Activated CD4-positive, alpha-beta memory T cell treated with anti-CD3 and anti-CD28 coated beads, Interleukin-2, amount 10 ng/mL, durations not matched to agents 7 days and 5 days (primary cell): ENCODE measurements at regions of chr3 and their contacts with region 1.

Region 1: DNA sequence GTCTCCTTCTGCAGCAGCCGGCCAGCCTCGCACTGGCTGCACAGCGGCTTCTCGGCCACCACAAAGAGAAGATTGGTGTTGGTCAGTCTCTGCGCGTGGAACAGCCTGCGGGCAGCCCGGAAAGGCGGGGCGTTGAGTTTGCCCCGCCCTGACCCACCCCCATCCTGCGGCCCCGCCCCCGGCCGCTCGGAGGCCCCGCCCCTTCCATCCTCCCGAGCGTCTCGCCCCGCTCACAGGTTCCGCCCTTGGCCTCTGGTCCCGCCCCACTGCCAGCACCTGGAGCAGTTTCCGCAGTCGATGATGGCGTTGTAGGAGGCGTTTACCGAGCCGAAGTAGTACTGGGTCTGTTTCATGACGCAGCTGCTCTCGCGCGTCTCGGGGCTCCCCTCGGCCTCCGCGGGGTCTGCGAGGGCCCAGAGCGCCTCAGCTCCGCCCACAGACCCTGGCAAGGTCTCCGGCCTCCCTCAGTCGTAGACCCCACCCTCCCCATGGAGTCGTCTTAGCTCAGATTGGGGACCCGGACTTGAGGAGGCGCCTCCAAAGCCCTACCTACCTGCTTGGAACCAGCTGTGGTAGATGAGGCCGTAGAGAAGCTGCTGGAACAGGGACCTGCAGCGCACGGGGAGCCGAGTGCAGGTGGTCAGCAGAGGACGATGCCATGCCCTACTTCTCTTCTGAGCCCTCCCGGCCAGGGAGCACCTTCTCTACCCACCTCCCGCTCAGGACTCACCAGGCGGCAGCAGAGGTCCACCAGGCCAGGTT is 5.9 kb upstream of the TMEM115 start:
- DNase-seq: peak; percentile 96
- H3K4me3 Mint-ChIP-seq: peak overlapping the region; percentile 75
- H3K27ac Mint-ChIP-seq: peak overlapping the region; percentile 64
- H3K4me1 Mint-ChIP-seq: peaks cover 11% of the 10 kb centered on the region
- H3K27me3 Mint-ChIP-seq: no peaks in the 10 kb centered on the region

Region 2: DNA sequence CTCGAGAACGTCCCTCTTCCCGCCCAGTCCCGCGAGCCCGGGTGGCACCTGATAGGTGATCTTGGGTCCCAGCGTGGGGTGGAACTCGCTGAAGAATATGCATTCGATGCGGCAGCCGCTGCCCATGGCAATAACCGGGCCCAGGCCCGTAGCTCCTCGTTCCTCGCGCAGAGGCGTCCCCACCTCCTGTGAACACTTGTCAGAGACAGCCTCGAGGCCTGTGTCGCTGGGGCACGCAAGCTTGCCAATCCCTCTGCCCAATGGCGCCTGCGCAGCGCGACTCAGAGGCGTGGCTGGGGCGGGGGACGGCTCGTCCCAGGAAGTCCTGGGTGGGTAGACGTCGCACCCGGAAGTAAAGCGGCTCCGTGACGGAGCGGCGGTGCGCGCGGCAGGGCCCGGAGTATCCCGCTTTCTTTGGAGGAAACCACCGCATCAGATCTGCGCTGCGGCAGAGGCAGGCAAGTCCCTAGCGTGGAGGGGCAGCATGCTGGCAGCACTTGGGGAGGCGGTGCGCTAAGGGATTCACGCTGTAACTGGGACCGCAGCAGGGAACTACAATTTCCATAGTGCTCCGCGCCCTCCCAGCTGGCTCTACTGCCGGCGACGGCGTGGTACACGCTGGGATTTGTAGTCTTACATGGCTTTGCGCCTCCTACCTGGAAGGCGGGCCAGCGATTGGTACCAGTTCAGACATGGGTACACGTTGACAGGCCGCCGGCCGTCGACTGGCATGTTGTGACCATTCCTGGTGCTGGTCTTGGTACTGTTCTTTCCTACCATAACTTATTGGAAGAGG is 14.5 kb before region 1 on chr3 and contains the starts of genes CYB561D2 and NPRL2:
- CTCF ChIA-PET with region 1: interaction called, 31 read pairs
- POLR2A ChIA-PET with region 1: interaction called, 19 read pairs
- DNase-seq: peak; percentile 99
- H3K4me3 Mint-ChIP-seq: peak within 1 kb of the TSS; percentile 91
- H3K27ac Mint-ChIP-seq: peak within 1 kb of the TSS; percentile 93
- H3K4me1 Mint-ChIP-seq: peaks cover 66% of the 10 kb centered on the region
- H3K27me3 Mint-ChIP-seq: no peaks in the 10 kb centered on the region
- total RNA-seq, gene CYB561D2: 37.1 to 39.7 TPM
- total RNA-seq, gene NPRL2: 48.8 to 50.1 TPM

Region 3: DNA sequence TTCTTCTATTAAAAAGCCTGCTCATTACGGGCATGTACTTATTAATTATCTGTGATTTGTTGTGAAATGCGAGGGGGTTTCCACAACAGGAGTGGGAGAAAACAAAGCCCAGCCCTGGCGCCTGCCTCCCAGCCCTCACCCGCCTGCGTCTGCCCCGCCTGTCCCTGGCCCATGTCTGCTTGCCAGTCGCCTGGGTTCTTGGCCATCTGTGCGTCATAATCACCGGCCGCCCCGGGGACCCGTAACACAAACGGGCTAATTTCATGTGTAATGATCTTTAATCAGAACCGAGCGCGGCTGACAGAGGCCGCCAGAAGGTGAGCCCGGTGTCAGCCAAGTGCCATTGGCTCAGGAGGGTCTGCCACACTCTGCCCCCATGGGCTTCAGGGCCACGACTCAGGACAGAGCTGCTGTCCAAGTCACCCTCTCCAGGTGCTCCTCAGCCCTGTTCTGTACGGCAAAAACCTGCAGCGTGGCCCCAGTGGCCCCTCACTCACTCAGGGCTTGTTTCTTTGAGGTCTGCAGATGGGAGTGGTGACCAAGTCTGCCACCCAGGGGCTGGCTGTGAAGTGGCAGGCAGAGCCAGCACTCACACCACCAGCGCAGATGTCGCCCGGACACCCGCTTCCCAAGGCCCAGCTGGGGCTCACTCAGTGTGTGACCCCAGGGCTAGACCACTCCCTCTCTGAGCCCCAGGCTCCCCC is 22.9 kb after region 1 on chr3:
- CTCF ChIA-PET with region 1: no interaction called
- POLR2A ChIA-PET with region 1: no interaction called
- DNase-seq: no peak
- H3K4me3 Mint-ChIP-seq: no peak overlapping the region
- H3K27ac Mint-ChIP-seq: no peak overlapping the region
- H3K4me1 Mint-ChIP-seq: peaks cover 6% of the 10 kb centered on the region
- H3K27me3 Mint-ChIP-seq: no peaks in the 10 kb centered on the region

Region 4: GRCh38 chr3:50450209-50450921 is 85.1 kb after region 1 on chr3:
- CTCF ChIA-PET with region 1: no interaction called
- POLR2A ChIA-PET with region 1: no interaction called
- DNase-seq: peak; percentile 84
- H3K4me3 Mint-ChIP-seq: peak overlapping the region; percentile 66
- H3K27ac Mint-ChIP-seq: peak overlapping the region; percentile 88
- H3K4me1 Mint-ChIP-seq: peaks cover 17% of the 10 kb centered on the region
- H3K27me3 Mint-ChIP-seq: no peaks in the 10 kb centered on the region